Activated CD4-positive, alpha-beta memory T cell treated with anti-CD3 and anti-CD28 coated beads for 36 hours (primary cell): ENCODE measurements at regions of chr6 and their contacts with region 1.

Region 1: DNA sequence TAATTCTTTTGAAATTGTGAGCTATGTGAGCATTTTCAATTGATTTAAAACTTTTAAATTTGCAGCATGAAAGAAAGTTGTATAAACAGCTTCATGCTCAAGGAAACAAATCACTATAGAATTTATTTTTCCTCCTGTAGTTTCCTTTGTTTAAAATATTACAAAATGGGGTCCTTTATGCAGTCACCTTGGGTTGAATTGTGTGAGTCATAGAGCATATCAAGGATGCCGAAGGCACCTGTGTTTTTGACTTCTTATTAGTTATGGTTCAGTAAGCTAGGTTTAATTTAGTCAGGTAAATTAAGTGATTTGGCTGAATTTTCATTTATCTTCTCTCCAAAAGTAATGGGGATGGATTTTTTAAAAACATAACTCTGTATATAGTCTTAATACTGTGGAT is 96.8 kb downstream of the BCKDHB start:
- DNase-seq: no peak
- H3K4me3 Mint-ChIP-seq: no peak overlapping the region
- H3K27ac Mint-ChIP-seq: no peak overlapping the region
- H3K4me1 Mint-ChIP-seq: no peaks in the 10 kb centered on the region
- H3K27me3 Mint-ChIP-seq: no peaks in the 10 kb centered on the region

Region 2: DNA sequence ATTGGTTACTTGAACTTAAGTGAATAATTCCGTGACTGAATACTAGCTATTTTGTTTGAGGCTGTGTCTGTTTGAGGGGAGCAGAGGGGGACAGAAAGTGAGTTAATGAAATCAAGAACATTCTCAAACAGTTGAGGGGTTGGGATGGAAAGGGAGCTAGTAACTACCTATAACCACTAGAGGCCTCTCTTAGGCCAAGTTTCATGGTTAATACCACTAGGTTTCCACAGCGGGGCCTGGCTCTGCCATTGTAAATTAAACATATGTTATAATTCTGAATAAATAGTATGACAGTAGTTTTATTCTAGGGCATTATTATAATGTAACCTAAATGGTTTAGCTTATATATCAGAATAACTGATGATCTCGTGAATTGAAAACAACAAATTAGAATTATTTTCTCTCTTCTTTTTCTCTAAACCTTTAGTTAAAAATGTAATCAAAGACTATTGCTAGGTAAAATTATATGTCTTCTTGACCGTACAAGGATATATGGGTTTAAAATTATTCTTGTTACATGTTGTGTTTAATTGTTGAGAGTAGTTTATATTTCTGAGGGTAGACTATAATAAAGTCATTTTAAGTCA is 11.2 kb after region 1 on chr6:
- CTCF ChIA-PET with region 1: interaction called, 14 read pairs
- POLR2A ChIA-PET with region 1: no interaction called
- intact Hi-C with region 1: no loop called
- DNase-seq: peak; percentile 23
- H3K4me3 Mint-ChIP-seq: no peak overlapping the region
- H3K27ac Mint-ChIP-seq: no peak overlapping the region
- H3K4me1 Mint-ChIP-seq: peaks cover 7% of the 10 kb centered on the region
- H3K27me3 Mint-ChIP-seq: no peaks in the 10 kb centered on the region